Head of caudate nucleus (tissue), 42 donors: ENCODE measurements at regions of chr19 and their contacts with region 1.

Region 1: GRCh38 chr19:4576016-4576933 is 16.8 kb upstream of the SEMA6B start:
- DNase-seq: peak in 39 of 42 donors; percentile 34 to 83 (median 65)

Region 2: GRCh38 chr19:4638828-4639530 is 62.7 kb after region 1 on chr19 and contains the start of gene TNFAIP8L1:
- intact Hi-C with region 1: loop called (anchors 5 kb)
- DNase-seq: peak; percentile 89 to 98 (median 96)